GM23248 (cell line): ENCODE measurements at regions of chr1 and their contacts with region 1.

Region 1: GRCh38 chr1:67500413-67500959 is 70.3 kb upstream of the SERBP1 start:
- DNase-seq: peak; percentile 90
- H3K4me3 ChIP-seq: no peak overlapping the region
- H3K27ac ChIP-seq: no peak overlapping the region
- H3K4me1 ChIP-seq: no peaks in the 10 kb centered on the region
- H3K27me3 ChIP-seq: no peaks in the 10 kb centered on the region; the same call in 1 of the 2 replicates

Region 2: GRCh38 chr1:67350783-67351182 is 149.7 kb before region 1 on chr1:
- in situ Hi-C with region 1: loop called (anchors 5 kb)
- DNase-seq: no peak
- H3K4me3 ChIP-seq: no peak overlapping the region
- H3K27ac ChIP-seq: no peak overlapping the region
- H3K4me1 ChIP-seq: peaks cover 10% of the 10 kb centered on the region
- H3K27me3 ChIP-seq: no peaks in the 10 kb centered on the region

Region 3: GRCh38 chr1:67832737-67833601 is 332.5 kb after region 1 on chr1 and contains the start of gene GNG12:
- in situ Hi-C with region 1: no loop called
- DNase-seq: peak; percentile 90
- H3K4me3 ChIP-seq: peak within 1 kb of the TSS; percentile 89
- H3K27ac ChIP-seq: peak within 1 kb of the TSS; percentile 92
- H3K4me1 ChIP-seq: peaks cover 41% of the 10 kb centered on the region
- H3K27me3 ChIP-seq: no peaks in the 10 kb centered on the region
- total RNA-seq, gene GNG12: 309 and 315 TPM in 2 replicates